A549 (cell line): ENCODE measurements at regions of chr17 and their contacts with region 1.

Region 1: DNA sequence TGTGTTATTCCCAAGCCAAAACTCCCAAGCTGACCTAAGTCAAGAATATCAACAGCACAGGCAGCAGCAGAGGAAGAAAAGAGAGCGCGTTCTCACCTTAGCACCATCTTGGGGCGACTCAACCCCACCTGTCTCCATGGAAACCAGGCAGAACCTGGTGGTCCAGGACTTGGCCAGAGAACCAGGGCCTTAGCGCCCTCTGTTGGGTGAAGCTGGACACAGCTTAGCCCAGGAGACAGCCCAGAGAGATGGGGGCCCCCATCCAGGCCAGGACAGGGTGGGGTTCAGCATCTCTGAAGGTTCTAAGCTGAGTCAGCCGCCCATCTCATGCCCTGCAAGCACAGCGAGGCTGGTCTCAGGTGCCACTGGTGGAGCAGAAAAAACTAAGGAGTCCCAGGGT is 60.1 kb upstream of the TMEM132E start:
- DNase-seq: peak in 1 of 2 experiments; percentile 21
- ATAC-seq: peak in 1 of 2 experiments; percentile 84; a peak in 3 of 6 replicates
- H3K4me3 ChIP-seq: no peak overlapping the region
- H3K27ac ChIP-seq: no peak overlapping the region
- H3K4me1 ChIP-seq: no peaks in the 10 kb centered on the region
- CTCF ChIP-seq: peak; percentile 31; the same call in 2 of the 3 replicates
- EP300 ChIP-seq: no peak
- POLR2A ChIP-seq: no peak
- RAD21 ChIP-seq: peak in 1 of 2 experiments; percentile 45; a peak in 2 of 5 replicates

Region 2: DNA sequence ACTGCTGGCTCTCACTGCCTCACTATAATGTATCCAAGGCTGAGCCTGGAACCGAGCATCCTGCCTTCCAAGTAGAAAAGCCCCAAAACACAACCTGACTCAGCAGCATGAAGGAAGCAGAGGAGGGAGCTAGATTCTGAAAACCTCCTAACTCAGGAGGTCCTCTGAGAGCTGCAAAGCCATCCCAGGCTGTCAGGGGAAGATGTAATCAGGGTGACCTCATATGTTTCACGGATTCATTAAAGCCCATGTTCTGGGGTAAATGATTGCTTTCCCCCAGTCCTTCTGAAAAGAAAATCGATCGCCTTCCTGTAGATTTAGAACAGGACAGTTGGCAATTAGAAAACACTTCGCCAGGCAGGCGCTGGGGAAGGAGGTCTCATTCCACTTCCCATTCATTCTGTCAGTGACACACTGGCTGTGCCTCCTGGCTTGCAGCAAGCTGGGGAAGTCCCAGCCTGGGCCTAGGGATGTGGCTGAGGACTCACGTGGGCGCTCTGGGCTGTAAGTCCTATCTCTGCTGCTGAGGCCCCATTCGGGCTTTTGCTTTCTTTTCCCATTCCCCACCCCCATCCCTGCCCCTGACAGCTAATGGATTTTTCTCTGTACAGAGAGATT is 15.6 kb before region 1 on chr17:
- CTCF ChIA-PET with region 1: interaction called, 10 read pairs
- POLR2A ChIA-PET with region 1: no interaction called
- DNase-seq: no peak
- ATAC-seq: no peak
- H3K4me3 ChIP-seq: no peak overlapping the region
- H3K27ac ChIP-seq: no peak overlapping the region
- H3K4me1 ChIP-seq: no peaks in the 10 kb centered on the region
- CTCF ChIP-seq: no peak
- EP300 ChIP-seq: no peak
- POLR2A ChIP-seq: no peak
- RAD21 ChIP-seq: no peak

Region 3: DNA sequence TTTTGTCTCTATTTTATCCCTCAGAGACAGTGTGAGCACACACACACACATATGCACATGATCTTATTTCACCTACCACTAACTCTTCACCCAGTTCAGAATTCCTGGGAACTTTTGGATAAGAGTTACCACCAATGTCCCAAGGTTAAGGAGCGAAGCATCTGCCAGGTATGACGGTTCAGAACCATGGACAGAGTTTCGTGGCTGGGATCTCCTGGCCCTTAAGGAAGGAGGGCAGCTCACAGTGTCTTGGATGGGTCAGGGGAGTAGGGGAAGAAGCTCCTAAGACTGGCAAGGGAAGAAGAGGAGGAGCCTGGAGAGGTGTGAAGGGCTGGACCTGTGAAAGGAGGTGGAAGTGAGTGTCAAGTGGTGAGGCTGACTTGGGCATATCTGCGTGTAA is 37.1 kb after region 1 on chr17:
- CTCF ChIA-PET with region 1: no interaction called
- POLR2A ChIA-PET with region 1: no interaction called
- DNase-seq: no peak
- ATAC-seq: peak in 1 of 2 experiments; percentile 49; a peak in 3 of 6 replicates
- H3K4me3 ChIP-seq: no peak overlapping the region
- H3K27ac ChIP-seq: no peak overlapping the region
- H3K4me1 ChIP-seq: no peaks in the 10 kb centered on the region
- CTCF ChIP-seq: no peak
- EP300 ChIP-seq: no peak
- POLR2A ChIP-seq: no peak
- RAD21 ChIP-seq: no peak

Region 4: GRCh38 chr17:34654276-34654880 is 135.1 kb after region 1 on chr17:
- CTCF ChIA-PET with region 1: no interaction called
- POLR2A ChIA-PET with region 1: no interaction called
- DNase-seq: no peak
- ATAC-seq: no peak
- H3K4me3 ChIP-seq: no peak overlapping the region
- H3K27ac ChIP-seq: no peak overlapping the region
- H3K4me1 ChIP-seq: no peaks in the 10 kb centered on the region
- CTCF ChIP-seq: no peak
- EP300 ChIP-seq: no peak
- POLR2A ChIP-seq: no peak
- RAD21 ChIP-seq: no peak